Heart left ventricle (tissue), 16 donors: ENCODE measurements at regions of chr13 and their contacts with region 1.

Region 1: GRCh38 chr13:27919934-27920676 is at the start of gene PDX1:
- DNase-seq: no peak
- ATAC-seq: peak; percentile 58 to 86 (median 72)
- H3K4me3 ChIP-seq: peak within 1 kb of the TSS; percentile 12 to 48 (median 32)
- H3K27ac ChIP-seq: no peak within 1 kb of the TSS
- H3K4me1 ChIP-seq: peaks cover 0 to 53% (median 25%) of the 10 kb centered on the region in 12 donors
- H3K27me3 ChIP-seq: peaks cover 79 to 100% (median 98%) of the 10 kb centered on the region in 9 donors
- CTCF ChIP-seq: no peak
- POLR2A ChIP-seq: no peak
- total RNA-seq, gene PDX1: not detected

Region 2: DNA sequence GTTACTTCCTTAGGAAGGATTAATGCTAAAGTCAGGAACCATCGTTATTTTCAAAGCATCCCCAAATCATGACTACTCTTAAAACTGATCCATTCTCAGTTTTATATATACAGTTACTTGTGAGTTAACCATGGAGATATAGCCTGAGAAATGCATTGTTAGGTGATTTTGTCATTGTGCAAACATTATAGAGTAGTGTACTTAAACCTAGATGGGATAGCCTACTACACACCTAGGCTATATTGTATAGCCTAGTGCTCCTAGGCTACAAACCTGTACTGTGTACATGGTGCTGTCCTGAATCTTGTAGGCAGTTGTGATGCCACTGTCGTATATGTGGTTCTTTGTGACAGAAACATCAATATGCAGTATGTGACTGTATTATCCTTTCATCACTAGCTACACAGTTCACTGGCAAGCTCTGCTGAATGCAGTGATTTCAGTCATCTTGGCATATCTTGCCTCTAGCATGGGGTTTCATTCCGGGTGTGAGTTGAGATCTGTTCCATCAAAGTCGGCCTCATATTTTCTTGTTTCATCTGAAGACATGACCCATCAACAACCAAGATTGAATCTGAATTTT is 1620.8 kb before region 1 on chr13:
- intact Hi-C with region 1: loop called in 1 of 10 experiments (anchors 10 kb)
- DNase-seq: no peak
- ATAC-seq: peak in 2 of 4 donors; percentile 15 to 18
- H3K4me3 ChIP-seq: no peak overlapping the region
- H3K27ac ChIP-seq: no peak overlapping the region
- H3K4me1 ChIP-seq: peaks cover 0 to 54% (median 24%) of the 10 kb centered on the region in 12 donors
- H3K27me3 ChIP-seq: no peaks in the 10 kb centered on the region
- CTCF ChIP-seq: no peak
- POLR2A ChIP-seq: no peak

Region 3: DNA sequence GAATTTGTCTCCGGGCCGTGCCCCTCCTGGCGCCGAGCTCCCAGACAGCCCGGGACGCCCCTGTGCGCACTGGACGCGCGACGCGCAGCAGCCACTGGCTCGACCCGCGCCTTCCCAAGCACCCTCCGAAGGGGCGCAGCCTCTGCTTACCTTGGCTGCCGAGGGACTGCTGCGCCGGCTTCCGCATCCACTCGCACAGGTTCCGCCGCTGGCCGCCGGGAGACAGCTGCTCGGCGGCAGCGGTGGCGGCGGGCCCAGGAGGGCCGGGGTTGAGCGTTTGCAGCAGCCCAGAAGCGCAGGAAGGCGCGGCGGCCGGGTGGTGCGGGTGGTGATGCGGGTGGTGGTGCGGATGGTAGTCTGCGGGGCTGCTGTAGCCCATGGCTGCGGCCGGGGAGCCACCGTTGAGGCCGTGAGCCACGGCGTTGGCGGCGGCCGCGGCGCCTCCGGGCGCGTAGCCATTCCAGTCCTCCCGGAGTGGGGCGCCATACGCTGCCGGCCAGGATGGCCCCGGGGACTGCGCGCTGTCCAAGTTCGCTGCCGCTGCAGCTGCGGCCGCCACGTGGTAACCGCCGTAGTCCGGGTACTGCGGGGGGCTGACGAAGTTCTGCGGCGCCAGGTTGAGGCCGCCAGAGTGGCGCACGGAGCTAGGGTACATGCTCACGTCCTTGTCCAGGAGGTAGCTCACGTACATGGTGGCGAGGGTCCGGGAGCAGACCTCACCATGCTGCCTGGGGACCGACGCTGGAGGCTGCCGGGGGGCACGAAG is 48.4 kb after region 1 on chr13:
- intact Hi-C with region 1: loop called in 1 of 10 experiments (anchors 5 kb)
- DNase-seq: no peak
- ATAC-seq: no peak
- H3K4me3 ChIP-seq: no peak overlapping the region
- H3K27ac ChIP-seq: no peak overlapping the region
- H3K4me1 ChIP-seq: peaks cover 0 to 27% (median 7%) of the 10 kb centered on the region in 12 donors
- H3K27me3 ChIP-seq: peaks cover 77 to 100% (median 95%) of the 10 kb centered on the region in 9 donors
- CTCF ChIP-seq: no peak
- POLR2A ChIP-seq: no peak

Region 4: DNA sequence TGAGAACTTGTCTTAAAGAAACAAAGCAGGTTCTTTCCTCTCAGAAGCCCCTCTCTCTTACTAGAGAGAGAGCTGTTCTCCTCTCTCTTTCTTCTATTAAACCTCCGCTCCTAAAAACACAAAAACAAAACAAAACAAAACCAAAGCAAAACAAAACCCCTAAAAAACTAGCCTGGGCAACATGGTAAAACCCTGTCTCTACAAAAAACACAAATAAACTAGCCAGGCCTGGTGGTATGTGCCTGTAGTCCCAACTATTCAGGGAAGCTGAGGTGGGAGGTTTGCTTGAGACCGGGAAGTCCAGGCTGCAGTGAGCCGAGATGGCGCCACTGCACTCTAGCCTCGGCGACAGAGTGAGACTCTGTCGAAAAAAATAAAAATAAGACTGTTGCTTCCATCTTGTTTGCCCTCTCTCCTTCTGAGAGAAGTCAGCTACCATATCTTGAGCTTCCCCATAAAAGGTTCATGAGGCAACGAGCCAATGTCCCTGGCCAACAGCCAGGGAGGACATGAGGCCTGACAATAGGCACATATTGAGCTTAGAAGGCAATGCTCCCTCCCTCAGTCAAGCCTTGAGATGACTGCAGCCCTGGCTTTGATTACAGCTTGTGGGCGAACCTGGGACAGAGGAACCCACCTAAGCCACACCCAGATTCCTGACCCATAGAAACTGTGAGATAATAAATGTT is 197.7 kb after region 1 on chr13:
- intact Hi-C with region 1: no loop called
- DNase-seq: peak; percentile 48 to 81 (median 55)
- ATAC-seq: peak in 3 of 4 donors; percentile 49 to 57 (median 50)
- H3K4me3 ChIP-seq: no peak overlapping the region
- H3K27ac ChIP-seq: no peak overlapping the region
- H3K4me1 ChIP-seq: peaks cover 0 to 7% (median 0%) of the 10 kb centered on the region in 12 donors
- H3K27me3 ChIP-seq: peaks cover 0 to 7% (median 0%) of the 10 kb centered on the region in 9 donors
- CTCF ChIP-seq: no peak
- POLR2A ChIP-seq: no peak